GM18951 (cell line): ENCODE measurements at regions of chr5 and their contacts with region 1.

Region 1: GRCh38 chr5:154610321-154611154 is 132.5 kb upstream of the HAND1 start:
- POLR2A ChIP-seq: no peak

Region 2: GRCh38 chr5:154087257-154087656 is 523.3 kb before region 1 on chr5:
- in situ Hi-C with region 1: loop called (anchors 25 kb)
- POLR2A ChIP-seq: no peak

Region 3: GRCh38 chr5:154478224-154478565 is 132.3 kb before region 1 on chr5 and contains the start of gene HAND1:
- in situ Hi-C with region 1: loop called (anchors 10 kb)
- POLR2A ChIP-seq: no peak